SK-N-SH (cell line): ENCODE measurements at regions of chr17 and their contacts with region 1.

Region 1: DNA sequence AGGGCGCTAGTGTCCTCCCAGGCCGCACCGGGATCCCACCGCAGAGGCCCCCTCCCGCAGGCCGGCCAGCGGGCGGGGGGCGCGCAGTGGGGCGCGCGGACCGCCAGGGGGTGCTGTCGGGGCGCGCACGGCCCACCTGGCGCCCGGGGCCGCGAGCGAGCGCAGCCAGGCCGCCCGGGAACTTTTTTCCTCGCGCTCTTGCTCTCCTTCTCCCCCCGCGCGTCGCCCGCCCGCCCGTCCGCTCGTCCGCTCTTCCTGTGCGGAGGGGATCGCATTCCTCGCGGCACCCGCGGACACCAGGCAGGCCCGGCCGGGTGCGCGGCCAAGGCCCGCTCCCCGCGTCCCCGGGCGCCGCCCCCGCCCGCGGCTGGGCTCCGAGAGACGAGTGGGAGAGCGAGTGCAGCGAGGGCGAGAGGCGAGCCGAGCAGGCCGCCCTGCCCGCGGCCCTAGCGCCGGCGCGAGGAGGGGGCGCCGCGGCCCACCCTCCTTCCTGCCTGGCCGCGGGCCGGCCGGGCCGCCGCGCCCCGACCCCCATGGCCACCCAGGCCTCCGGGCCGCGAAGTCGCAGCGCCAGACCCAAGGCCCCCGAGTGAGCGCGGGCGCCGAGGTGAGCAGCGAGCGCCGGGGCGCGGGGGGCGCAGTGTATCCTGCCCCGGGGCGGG is at the start of gene RAI1:
- DNase-seq: peak; percentile 95
- H3K4me3 ChIP-seq: peak within 1 kb of the TSS; percentile 81 to 85
- H3K27ac ChIP-seq: peak within 1 kb of the TSS; percentile 94 to 96
- H3K4me1 ChIP-seq: peaks cover 23 to 29% of the 10 kb centered on the region in 2 experiments
- H3K27me3 ChIP-seq: no peaks in the 10 kb centered on the region
- CTCF ChIP-seq: peak; percentile 59
- EP300 ChIP-seq: no peak
- RAD21 ChIP-seq: peak; percentile 75
- polyA plus RNA-seq, gene RAI1: 2.6 and 4.7 TPM in 2 replicates

Region 2: DNA sequence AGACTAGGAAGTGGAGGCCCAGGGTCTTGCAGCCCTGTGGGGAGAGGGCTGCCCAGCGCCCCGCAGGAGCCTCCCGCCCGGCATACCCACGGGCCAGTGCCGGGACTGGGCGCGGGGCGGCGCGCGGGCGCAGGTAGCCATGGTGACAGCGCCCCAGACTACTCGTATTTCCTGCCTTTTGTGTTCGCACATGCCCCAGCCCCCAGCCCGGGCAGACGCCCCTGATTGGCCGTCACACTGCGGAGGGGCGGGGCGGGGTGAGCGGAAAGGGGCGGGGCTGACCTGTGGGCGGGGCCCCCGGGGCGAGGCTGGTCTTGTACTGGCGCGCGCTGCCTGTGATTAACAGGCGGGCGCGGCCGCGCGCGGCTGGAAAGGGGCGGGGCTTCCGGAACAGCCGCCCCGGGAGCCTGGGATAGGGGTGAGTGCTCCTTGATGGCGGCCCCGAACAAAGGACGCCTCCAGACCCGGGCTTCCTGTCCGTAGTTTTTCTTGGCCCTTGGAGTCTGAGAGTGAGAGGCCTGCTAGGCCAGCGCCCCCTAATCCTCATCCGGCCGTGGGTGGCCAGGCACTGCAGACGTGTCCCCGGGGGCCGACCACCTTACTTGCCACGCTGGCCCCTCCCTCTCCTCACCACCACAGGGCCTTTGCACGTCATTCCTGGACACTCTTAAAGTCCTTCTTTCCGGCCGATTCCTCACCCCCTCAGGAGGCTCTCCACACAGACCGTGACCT is 70.9 kb after region 1 on chr17:
- CTCF ChIA-PET with region 1: interaction called, 24 read pairs
- POLR2A ChIA-PET with region 1: no interaction called
- DNase-seq: peak; percentile 94
- H3K4me3 ChIP-seq: peak overlapping the region; percentile 19 to 34; a peak in 2 of 4 replicates
- H3K27ac ChIP-seq: peak overlapping the region; percentile 52 to 83; a peak in 3 of 4 replicates
- H3K4me1 ChIP-seq: peaks cover 24 to 77% of the 10 kb centered on the region in 2 experiments
- H3K27me3 ChIP-seq: no peaks in the 10 kb centered on the region
- CTCF ChIP-seq: peak; percentile 25; the same call in 1 of the 2 replicates
- EP300 ChIP-seq: no peak
- RAD21 ChIP-seq: no peak; the same call in 1 of the 2 replicates

Region 3: DNA sequence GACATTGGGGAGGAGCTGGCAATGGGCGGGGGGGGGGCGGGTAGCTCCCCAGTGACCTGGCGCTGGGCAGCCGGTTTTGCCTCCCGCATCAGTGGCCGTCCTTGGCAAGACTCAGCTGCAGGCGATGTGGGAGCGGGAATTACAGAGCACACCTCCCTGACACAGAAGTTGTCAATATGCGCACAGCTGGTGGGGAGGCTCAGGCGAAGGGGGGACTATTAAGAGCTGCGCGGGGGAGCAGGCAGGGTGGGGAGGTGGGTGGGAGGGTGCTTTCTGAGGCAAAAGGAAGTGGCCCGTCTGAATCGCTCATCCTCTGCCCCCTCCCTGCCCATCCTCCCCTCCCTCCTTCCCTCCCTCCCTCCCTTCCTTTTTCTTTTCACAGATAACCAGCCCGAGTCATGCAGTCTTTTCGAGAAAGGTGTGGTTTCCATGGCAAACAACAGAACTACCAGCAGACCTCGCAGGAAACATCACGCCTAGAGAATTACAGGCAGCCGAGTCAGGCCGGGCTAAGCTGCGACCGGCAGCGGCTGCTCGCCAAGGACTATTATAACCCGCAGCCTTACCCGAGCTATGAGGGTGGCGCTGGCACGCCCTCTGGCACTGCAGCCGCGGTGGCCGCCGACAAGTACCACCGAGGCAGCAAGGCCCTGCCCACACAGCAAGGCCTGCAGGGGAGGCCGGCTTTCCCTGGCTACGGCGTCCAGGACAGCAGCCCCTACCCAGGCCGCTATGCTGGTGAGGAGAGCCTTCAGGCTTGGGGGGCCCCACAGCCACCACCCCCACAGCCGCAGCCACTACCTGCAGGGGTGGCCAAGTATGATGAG is 111.4 kb after region 1 on chr17:
- CTCF ChIA-PET with region 1: interaction called, 15 read pairs
- POLR2A ChIA-PET with region 1: interaction called, 9 read pairs
- DNase-seq: peak; percentile 84
- H3K4me3 ChIP-seq: no peak overlapping the region
- H3K27ac ChIP-seq: peak overlapping the region in 1 of 2 experiments; percentile 96; a peak in 2 of 4 replicates
- H3K4me1 ChIP-seq: peaks cover 33 to 78% of the 10 kb centered on the region in 2 experiments; a peak in 3 of 4 replicates
- H3K27me3 ChIP-seq: no peaks in the 10 kb centered on the region
- CTCF ChIP-seq: no peak
- EP300 ChIP-seq: no peak
- RAD21 ChIP-seq: peak; percentile 3; the same call in 1 of the 2 replicates

Region 4: GRCh38 chr17:17836250-17836817 is 155.0 kb after region 1 on chr17:
- CTCF ChIA-PET with region 1: interaction called, 13 read pairs
- POLR2A ChIA-PET with region 1: interaction called, 8 read pairs
- DNase-seq: peak; percentile 96
- H3K4me3 ChIP-seq: peak overlapping the region; percentile 75 to 79
- H3K27ac ChIP-seq: peak overlapping the region; percentile 69 to 95
- H3K4me1 ChIP-seq: peaks cover 22 to 63% of the 10 kb centered on the region in 2 experiments; a peak in 3 of 4 replicates
- H3K27me3 ChIP-seq: no peaks in the 10 kb centered on the region
- CTCF ChIP-seq: no peak
- EP300 ChIP-seq: no peak; a peak in 1 of 4 replicates
- RAD21 ChIP-seq: peak; percentile 11